ENCODE measurements at regions of chr11 and their contacts with region 1.

Region 1: DNA sequence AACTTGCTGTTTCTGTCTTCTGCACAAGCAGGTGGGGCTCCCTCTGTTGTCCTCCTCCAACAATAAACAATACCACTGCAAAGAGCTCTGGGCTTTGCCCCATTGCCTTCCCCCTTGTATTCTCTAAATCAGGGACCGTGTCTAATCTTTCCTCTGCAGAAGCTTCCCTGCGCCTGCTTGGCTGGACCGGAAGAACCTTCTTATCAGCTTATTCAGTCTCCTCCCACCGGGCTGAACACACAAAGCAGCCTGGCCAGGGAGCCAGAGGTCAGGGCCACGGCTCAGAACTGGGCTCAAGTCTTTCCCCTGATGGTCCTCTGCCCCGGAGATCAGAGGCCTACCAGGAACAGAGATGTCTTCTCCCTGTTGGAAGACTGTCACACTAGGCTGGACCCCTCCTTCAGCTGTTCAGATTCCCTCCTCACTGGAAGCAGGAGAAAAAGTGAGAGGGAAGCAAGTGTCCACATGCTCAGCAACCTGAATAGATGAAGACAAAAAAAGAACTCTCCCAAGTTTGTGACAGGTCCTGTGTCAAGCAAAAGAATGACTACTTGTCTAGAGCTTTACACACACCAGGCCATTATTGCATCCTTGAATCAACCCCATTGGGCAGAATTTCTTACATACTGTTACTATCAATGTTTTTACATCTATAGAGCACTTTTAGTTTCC is 63.7 kb downstream of the RAB30 start:
- DNase-seq: no peak
- ATAC-seq: peak; percentile 73
- H3K4me3 ChIP-seq: peak overlapping the region; percentile 24; the same call in 1 of the 2 replicates
- H3K27ac ChIP-seq: peak overlapping the region; percentile 67
- H3K4me1 ChIP-seq: peaks cover 26% of the 10 kb centered on the region
- H3K27me3 ChIP-seq: no peaks in the 10 kb centered on the region
- CTCF ChIP-seq: peak in 1 of 3 experiments; percentile 10; a peak in 1 of 6 replicates
- EP300 ChIP-seq: no peak
- POLR2A ChIP-seq: no peak
- RAD21 ChIP-seq: no peak

Region 2: DNA sequence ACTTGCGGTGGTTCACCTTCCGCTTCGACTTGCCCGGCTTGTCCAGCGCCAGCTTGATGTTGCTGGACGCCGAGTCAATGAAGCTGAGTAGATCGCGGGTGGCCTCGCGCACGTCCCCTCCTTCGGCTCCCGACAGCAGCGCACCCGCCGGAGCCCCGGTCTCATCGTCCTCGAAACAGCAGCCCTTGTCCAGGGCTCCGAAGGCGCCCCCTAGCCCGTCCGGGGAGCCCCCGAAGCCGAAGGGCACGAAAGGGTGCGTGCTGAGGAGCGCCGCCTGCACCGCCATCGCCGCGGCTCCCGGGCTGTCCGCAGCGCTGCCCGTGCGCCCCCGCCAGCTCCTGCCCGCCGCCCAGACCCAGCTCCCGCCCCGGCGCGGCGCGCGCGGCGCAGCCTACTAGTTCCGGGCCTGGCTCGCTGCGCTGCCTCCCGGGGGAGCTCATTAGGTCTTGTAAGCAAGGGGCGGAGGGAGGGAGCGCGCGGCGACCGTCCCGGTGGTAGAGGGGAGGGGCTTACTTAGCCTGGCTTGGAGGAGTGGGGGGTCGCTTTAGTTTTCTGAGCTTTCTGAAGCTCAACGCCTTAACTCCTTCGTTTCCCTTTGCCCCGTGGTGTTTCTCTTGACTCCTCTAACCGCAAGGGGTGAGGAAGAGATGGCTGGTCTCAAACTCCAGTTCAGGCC is 274.5 kb before region 1 on chr11 and contains the start of gene FAM181B:
- CTCF ChIA-PET with region 1: no interaction called
- POLR2A ChIA-PET with region 1: no interaction called
- RAD21 ChIA-PET with region 1: no interaction called
- SMC1A ChIA-PET with region 1: no interaction called
- in situ Hi-C with region 1: no loop called
- intact Hi-C with region 1: no loop called
- DNase-seq: no peak
- ATAC-seq: no peak
- H3K4me3 ChIP-seq: no peak within 1 kb of the TSS
- H3K27ac ChIP-seq: no peak within 1 kb of the TSS
- H3K4me1 ChIP-seq: no peaks in the 10 kb centered on the region
- H3K27me3 ChIP-seq: peaks cover 12 to 15% of the 10 kb centered on the region in 2 experiments
- CTCF ChIP-seq: no peak
- EP300 ChIP-seq: no peak
- POLR2A ChIP-seq: no peak
- RAD21 ChIP-seq: no peak
- polyA plus RNA-seq, gene FAM181B: not detected

Region 3: GRCh38 chr11:82873919-82874333 is 134.1 kb before region 1 on chr11:
- CTCF ChIA-PET with region 1: no interaction called
- POLR2A ChIA-PET with region 1: no interaction called
- RAD21 ChIA-PET with region 1: no interaction called
- SMC1A ChIA-PET with region 1: no interaction called
- in situ Hi-C with region 1: no loop called
- intact Hi-C with region 1: no loop called
- DNase-seq: no peak
- ATAC-seq: no peak
- H3K4me3 ChIP-seq: no peak overlapping the region
- H3K27ac ChIP-seq: no peak overlapping the region
- H3K4me1 ChIP-seq: no peaks in the 10 kb centered on the region
- H3K27me3 ChIP-seq: no peaks in the 10 kb centered on the region
- CTCF ChIP-seq: no peak
- EP300 ChIP-seq: no peak
- POLR2A ChIP-seq: no peak
- RAD21 ChIP-seq: no peak

Region 4: DNA sequence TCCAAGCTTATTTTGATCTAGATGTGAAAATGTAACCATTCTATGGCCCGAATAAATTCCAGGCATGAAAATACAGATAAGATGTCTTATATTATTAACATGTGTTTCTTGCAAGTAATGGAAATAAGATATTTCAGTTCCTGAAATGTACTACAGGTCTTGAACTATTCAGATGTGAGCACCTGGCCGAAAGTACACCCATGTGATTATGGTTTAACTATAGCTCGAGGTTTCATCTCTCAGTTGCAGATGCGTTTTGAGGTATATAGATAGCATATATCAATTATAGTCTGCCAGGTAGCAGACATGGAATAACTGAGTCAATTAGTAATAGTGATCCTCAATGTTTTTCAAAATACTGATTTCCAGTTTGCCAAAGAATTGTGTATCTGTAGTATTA is 38.2 kb before region 1 on chr11:
- CTCF ChIA-PET with region 1: interaction called, 3 read pairs
- POLR2A ChIA-PET with region 1: interaction called, 6 read pairs
- RAD21 ChIA-PET with region 1: interaction called, 11 read pairs
- SMC1A ChIA-PET with region 1: interaction called, 9 read pairs
- in situ Hi-C with region 1: no loop called
- intact Hi-C with region 1: no loop called
- DNase-seq: peak; percentile 84
- ATAC-seq: peak; percentile 83
- H3K4me3 ChIP-seq: no peak overlapping the region
- H3K27ac ChIP-seq: peak overlapping the region; percentile 94
- H3K4me1 ChIP-seq: peaks cover 41% of the 10 kb centered on the region
- H3K27me3 ChIP-seq: no peaks in the 10 kb centered on the region
- CTCF ChIP-seq: no peak
- EP300 ChIP-seq: peak; percentile 99 to 100
- POLR2A ChIP-seq: no peak
- RAD21 ChIP-seq: no peak

Region 5: GRCh38 chr11:83033972-83034672 is 26.1 kb after region 1 on chr11:
- CTCF ChIA-PET with region 1: interaction called, 6 read pairs
- POLR2A ChIA-PET with region 1: interaction called, 11 read pairs
- RAD21 ChIA-PET with region 1: interaction called, 24 read pairs
- SMC1A ChIA-PET with region 1: interaction called, 33 read pairs
- in situ Hi-C with region 1: no loop called
- intact Hi-C with region 1: no loop called
- DNase-seq: no peak
- ATAC-seq: peak; percentile 50
- H3K4me3 ChIP-seq: 0 out of 2 replicates have a peak overlapping the region, but pooled peaks have one; percentile 10
- H3K27ac ChIP-seq: no peak overlapping the region
- H3K4me1 ChIP-seq: peaks cover 21% of the 10 kb centered on the region
- H3K27me3 ChIP-seq: no peaks in the 10 kb centered on the region
- CTCF ChIP-seq: no peak
- EP300 ChIP-seq: no peak
- POLR2A ChIP-seq: no peak
- RAD21 ChIP-seq: no peak

Region 6: DNA sequence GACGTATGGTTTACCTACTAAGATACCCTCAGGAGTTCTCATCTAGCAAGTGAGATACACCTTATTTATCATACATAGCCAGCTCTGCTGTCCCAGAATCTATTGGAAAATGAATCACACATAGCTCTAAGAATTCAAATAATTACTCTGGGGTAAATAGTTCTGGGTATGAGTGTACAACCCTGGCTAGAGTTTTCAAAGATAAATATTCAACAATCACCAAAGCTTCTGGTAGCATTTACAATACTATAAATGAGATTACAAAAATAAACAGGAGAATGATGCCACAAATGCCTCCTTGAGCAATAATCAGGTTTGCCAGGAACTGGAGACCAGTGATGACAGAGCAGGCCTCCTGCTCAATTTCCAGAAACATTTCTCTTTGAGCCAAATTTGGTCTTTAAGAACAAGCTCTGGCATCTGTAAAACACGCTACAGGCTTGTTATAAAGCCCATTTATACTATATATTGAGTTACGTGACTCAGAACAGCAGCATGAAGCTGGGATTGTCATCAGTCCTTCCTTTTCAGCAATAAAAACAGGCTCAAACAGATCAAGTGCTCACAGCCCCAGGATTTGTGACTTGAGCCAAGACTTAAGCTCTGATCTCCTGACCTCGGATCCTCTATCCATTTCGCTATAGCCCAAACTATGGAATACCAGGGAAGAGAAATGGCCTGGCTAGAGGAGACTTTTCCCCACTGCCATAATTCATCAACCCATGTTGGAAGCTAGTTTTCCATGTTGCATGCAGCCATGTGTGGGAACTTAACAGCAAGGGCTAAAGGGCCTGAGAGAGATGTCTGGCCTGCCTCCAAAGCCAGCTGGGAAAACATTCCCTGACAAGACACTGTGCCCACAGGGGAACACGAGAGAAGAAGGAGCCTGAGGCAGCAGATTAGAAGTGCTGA is 44.0 kb after region 1 on chr11:
- CTCF ChIA-PET with region 1: interaction called, 5 read pairs
- POLR2A ChIA-PET with region 1: interaction called, 5 read pairs
- RAD21 ChIA-PET with region 1: interaction called, 15 read pairs
- SMC1A ChIA-PET with region 1: interaction called, 35 read pairs
- in situ Hi-C with region 1: no loop called
- intact Hi-C with region 1: no loop called
- DNase-seq: no peak
- ATAC-seq: no peak
- H3K4me3 ChIP-seq: no peak overlapping the region
- H3K27ac ChIP-seq: no peak overlapping the region
- H3K4me1 ChIP-seq: peaks cover 40% of the 10 kb centered on the region
- H3K27me3 ChIP-seq: no peaks in the 10 kb centered on the region
- CTCF ChIP-seq: no peak
- EP300 ChIP-seq: no peak
- POLR2A ChIP-seq: no peak
- RAD21 ChIP-seq: no peak